ENCODE measurements at regions of chr6 and their contacts with region 1.

Region 1: GRCh38 chr6:89371849-89372505 is 19.5 kb upstream of the UBE2J1 start:
- DNase-seq: peak; percentile 89
- H3K4me3 ChIP-seq: no peak overlapping the region
- H3K27ac ChIP-seq: peak overlapping the region; percentile 40
- H3K4me1 ChIP-seq: peaks cover 64% of the 10 kb centered on the region
- CTCF ChIP-seq: peak; percentile 100

Region 2: DNA sequence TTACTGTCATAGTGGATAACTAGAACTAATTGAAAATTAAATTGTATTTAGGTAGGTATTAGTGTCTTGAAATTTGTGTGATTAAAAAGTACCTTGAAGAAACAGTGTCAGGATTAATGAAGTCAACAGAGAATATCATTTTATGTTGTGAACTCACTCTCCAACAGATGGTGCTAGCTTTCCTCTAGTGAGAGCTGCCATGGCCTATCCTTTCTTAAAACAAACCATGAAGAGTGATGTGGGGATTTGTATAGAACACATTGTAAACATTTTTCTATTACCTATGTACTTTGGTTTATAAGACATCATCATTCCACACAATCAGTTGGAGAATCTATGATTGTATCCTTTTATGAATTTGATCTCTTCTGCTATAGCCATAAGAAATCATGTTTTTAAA is 249.4 kb before region 1 on chr6:
- CTCF ChIA-PET with region 1: no interaction called
- POLR2A ChIA-PET with region 1: no interaction called
- intact Hi-C with region 1: loop called (anchors 1 kb)
- DNase-seq: peak; percentile 63
- H3K4me3 ChIP-seq: no peak overlapping the region
- H3K27ac ChIP-seq: no peak overlapping the region
- H3K4me1 ChIP-seq: no peaks in the 10 kb centered on the region
- CTCF ChIP-seq: peak; percentile 85

Region 3: DNA sequence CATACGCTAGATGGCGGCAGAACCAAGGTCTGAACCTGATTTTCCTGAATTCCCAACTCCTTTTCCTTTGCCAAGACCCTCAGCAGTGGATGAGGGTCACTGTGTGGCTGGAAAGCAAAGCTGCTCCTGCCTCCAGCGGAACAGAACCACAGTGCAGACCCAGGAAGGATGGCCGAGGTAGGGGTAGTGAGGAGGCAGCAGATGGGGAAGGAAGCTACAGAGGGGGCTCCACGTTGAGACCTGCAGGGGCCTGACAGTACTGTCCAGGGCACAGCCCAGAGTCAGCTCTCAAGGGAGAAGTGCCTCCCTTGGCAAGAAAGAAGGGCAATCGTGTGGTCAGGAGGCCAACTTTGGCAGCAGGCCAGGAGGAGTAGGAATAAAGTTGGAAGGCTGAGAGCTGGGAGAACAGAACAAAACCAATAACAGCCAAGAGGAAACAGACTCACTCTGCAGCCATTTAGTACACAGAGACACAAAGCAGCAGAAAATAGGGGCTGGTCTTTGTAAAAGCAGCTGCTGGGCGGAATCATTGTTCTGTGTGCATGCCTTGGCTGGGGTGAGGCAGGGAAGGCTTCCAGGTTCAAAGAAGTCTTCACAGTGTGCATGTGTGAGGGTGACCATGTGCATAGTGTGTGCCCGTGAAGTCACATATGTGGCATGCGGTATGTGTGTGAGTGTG is 60.0 kb before region 1 on chr6:
- CTCF ChIA-PET with region 1: interaction called, 3 read pairs
- POLR2A ChIA-PET with region 1: no interaction called
- intact Hi-C with region 1: loop called (anchors 5 kb)
- DNase-seq: peak; percentile 29
- H3K4me3 ChIP-seq: no peak overlapping the region
- H3K27ac ChIP-seq: peak overlapping the region; percentile 35
- H3K4me1 ChIP-seq: peaks cover 22% of the 10 kb centered on the region
- CTCF ChIP-seq: peak; percentile 78

Region 4: GRCh38 chr6:89412071-89413005 is 40.4 kb after region 1 on chr6 and contains the start of gene RRAGD:
- CTCF ChIA-PET with region 1: interaction called, 8 read pairs
- POLR2A ChIA-PET with region 1: interaction called, 5 read pairs
- intact Hi-C with region 1: loop called (anchors 1 kb)
- DNase-seq: peak; percentile 74
- H3K4me3 ChIP-seq: peak within 1 kb of the TSS; percentile 84
- H3K27ac ChIP-seq: peak within 1 kb of the TSS; percentile 12
- H3K4me1 ChIP-seq: peaks cover 38% of the 10 kb centered on the region
- CTCF ChIP-seq: peak; percentile 37; the same call in 1 of the 2 replicates
- total RNA-seq, gene RRAGD: 6.2 and 6.5 TPM in 2 replicates

Region 5: GRCh38 chr6:89597988-89598692 is 226.2 kb after region 1 on chr6:
- CTCF ChIA-PET with region 1: no interaction called
- POLR2A ChIA-PET with region 1: no interaction called
- intact Hi-C with region 1: loop called (anchors 5 kb)
- DNase-seq: peak; percentile 48
- H3K4me3 ChIP-seq: no peak overlapping the region
- H3K27ac ChIP-seq: no peak overlapping the region
- H3K4me1 ChIP-seq: peaks cover 28% of the 10 kb centered on the region
- CTCF ChIP-seq: peak; percentile 68